H1 (cell line): ENCODE measurements at regions of chr22 and their contacts with region 1.

Region 1: DNA sequence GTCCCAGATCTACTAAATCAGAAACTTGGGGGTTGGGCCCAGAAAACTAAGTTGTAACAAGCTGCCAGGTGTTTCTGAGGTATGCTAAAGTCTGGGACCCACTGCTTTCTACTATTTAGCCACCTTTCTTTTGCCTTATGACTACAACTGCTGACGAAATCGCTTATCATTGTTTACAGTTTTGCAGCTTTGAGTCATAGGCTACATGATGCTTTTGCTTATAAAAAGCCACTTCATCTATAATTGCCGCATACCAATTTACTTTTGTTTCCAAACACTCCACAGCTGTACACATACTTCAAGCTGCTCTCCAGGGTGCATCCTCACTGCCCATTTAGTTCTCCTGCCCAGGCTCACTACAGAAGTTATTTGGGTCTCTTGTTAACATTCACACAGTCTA is 144.7 kb downstream of the ENTHD1 start:
- DNase-seq: no peak
- H3K4me3 ChIP-seq: no peak overlapping the region
- H3K27ac ChIP-seq: no peak overlapping the region
- H3K4me1 ChIP-seq: no peaks in the 10 kb centered on the region
- H3K27me3 ChIP-seq: no peaks in the 10 kb centered on the region
- CTCF ChIP-seq: no peak
- EP300 ChIP-seq: no peak
- POLR2A ChIP-seq: no peak
- RAD21 ChIP-seq: no peak

Region 2: DNA sequence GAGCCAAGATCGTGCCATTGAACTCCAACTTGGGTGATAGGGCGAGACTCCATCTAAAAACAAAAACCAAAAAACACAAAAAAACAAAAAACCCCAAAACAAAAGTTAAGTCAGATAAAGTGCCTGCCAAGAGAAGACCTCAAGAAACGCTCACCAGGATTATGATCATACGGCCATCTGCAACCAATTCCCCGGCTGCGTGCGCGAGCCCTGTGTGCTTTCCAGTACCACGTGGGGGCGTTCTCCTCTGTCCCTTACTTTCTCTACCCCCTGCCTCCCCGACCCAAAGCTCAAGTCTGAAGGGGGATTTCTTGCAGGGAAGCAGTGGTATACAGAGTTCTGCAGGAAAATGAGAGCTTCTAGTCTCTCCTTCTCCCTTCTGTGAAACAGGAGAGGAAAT is 205.8 kb before region 1 on chr22:
- CTCF ChIA-PET with region 1: interaction called, 10 read pairs
- POLR2A ChIA-PET with region 1: no interaction called
- DNase-seq: no peak
- H3K4me3 ChIP-seq: no peak overlapping the region
- H3K27ac ChIP-seq: no peak overlapping the region
- H3K4me1 ChIP-seq: peaks cover 0 to under 1% (median under 1%) of the 10 kb centered on the region in 4 experiments; a peak in 3 of 7 replicates
- H3K27me3 ChIP-seq: peaks cover 0 to 15% (median 11%) of the 10 kb centered on the region in 4 experiments; a peak in 6 of 7 replicates
- CTCF ChIP-seq: peak; percentile 67 to 89 (median 84)
- EP300 ChIP-seq: no peak
- POLR2A ChIP-seq: no peak
- RAD21 ChIP-seq: peak; percentile 75 to 78

Region 3: GRCh38 chr22:39731881-39732555 is 16.9 kb before region 1 on chr22:
- CTCF ChIA-PET with region 1: interaction called, 11 read pairs
- POLR2A ChIA-PET with region 1: no interaction called
- DNase-seq: peak in 1 of 2 experiments; percentile 49
- H3K4me3 ChIP-seq: no peak overlapping the region
- H3K27ac ChIP-seq: no peak overlapping the region
- H3K4me1 ChIP-seq: peaks cover 0 to 5% (median 0%) of the 10 kb centered on the region in 4 experiments; a peak in 1 of 7 replicates
- H3K27me3 ChIP-seq: no peaks in the 10 kb centered on the region
- CTCF ChIP-seq: peak in 1 of 3 experiments; percentile 10; a peak in 1 of 4 replicates
- EP300 ChIP-seq: no peak
- POLR2A ChIP-seq: no peak
- RAD21 ChIP-seq: peak in 1 of 2 experiments; percentile 17; a peak in 1 of 4 replicates

Region 4: DNA sequence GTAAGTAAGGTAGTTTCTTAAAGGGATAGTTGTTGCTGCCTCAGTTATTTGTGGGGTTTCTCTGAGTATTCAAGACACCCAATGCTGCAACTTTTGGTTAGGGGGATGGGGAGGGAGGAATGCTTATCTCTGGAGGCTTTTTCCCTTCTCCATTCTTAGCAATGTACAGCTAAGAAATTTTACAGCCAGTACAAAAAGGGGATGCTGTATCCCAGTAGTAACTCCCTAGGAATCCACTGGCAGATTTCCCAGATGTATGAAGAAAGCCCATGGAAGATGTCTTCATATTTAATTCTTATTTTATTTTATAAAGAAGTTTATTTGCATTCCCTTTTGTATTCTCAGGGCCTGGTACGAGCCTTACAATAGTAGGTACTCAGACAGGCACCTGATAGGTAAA is 10.1 kb before region 1 on chr22:
- CTCF ChIA-PET with region 1: interaction called, 11 read pairs
- POLR2A ChIA-PET with region 1: no interaction called
- DNase-seq: no peak
- H3K4me3 ChIP-seq: no peak overlapping the region
- H3K27ac ChIP-seq: no peak overlapping the region
- H3K4me1 ChIP-seq: peaks cover 0 to 4% (median 3%) of the 10 kb centered on the region in 4 experiments; a peak in 3 of 7 replicates
- H3K27me3 ChIP-seq: no peaks in the 10 kb centered on the region
- CTCF ChIP-seq: no peak
- EP300 ChIP-seq: no peak
- POLR2A ChIP-seq: no peak
- RAD21 ChIP-seq: no peak